ENCODE measurements at regions of chr10 and their contacts with region 1.

Region 1: GRCh38 chr10:2927958-2928840 is 139.1 kb upstream of the PFKP start:
- DNase-seq: peak; percentile 89
- ATAC-seq: peak; percentile 85
- H3K4me3 Mint-ChIP-seq: no peak overlapping the region
- H3K27ac Mint-ChIP-seq: no peak overlapping the region
- H3K4me1 Mint-ChIP-seq: peaks cover 30% of the 10 kb centered on the region
- H3K27me3 Mint-ChIP-seq: no peaks in the 10 kb centered on the region; the same call in 1 of the 2 replicates
- CTCF ChIP-seq: peak; percentile 85

Region 2: DNA sequence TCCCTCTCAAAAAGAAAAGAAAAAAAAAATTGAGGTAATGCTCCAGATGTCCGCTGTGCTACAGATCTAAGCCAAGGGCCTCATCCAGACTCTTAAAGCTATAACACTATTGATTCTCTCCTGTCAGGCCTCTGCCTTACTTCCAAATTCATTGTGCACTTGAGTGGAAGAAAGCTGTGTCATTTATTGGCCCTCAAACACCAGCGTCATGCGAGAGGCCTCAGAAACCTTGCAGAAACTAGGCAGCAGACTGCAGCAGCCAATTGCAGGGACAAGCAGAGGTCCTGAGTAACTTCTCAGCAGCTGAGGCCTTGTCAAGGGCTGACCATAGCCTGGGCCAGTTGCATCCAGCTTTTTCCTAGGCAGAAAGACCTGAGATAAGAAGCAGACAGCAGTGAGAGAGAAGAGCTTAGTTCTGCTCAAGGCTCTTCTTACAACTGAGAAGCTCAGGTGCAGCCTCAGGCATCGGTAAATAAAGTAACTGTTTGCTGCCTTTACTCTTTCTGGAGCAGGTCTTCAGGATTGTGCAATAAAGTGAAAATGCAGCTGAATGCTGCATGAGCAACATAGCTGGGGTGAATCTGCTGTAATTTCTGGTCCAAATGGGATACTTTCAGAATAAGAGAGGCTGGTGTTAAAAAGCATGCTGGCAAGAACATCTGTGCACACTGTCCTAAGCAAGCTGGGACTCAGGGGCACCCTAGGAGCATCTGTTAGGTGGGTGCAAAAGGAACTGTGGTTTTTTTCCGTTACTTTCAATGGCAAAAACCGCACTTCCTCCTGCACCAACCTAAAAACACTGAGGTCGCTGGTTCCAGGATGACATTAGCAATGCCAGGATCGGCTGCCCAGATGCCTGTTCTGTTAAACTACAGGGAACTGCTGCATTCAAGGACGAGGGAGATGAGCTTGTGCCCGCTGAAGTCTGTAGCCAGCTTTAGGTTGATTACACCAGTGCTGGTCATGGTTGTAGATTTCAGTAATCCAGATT is 42.6 kb before region 1 on chr10:
- CTCF ChIA-PET with region 1: no interaction called
- POLR2A ChIA-PET with region 1: no interaction called
- DNase-seq: no peak
- ATAC-seq: no peak
- H3K4me3 Mint-ChIP-seq: no peak overlapping the region
- H3K27ac Mint-ChIP-seq: no peak overlapping the region
- H3K4me1 Mint-ChIP-seq: 0 out of 2 replicates have a peak, but pooled peaks cover 6% of the 10 kb centered on the region
- H3K27me3 Mint-ChIP-seq: no peaks in the 10 kb centered on the region
- CTCF ChIP-seq: no peak

Region 3: DNA sequence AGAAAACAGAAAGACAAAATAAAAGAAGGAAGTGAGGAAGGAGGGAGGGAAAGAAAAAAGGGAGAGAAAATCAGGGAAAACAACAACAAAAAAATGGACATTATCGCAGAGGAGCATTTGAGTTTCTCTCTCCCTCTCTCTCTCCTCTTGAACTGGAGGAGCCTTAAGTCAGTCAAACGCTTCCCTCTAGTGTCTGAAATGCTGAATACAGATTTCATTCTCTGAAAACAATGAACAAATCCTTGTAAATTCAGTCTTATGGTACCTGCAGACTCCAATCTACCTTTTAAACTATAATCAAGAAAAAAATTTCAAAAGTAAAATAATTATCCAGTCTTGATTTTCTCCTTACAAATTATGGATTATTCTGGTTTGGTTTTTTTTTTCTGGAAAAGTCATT is 49.9 kb after region 1 on chr10:
- CTCF ChIA-PET with region 1: interaction called, 28 read pairs
- POLR2A ChIA-PET with region 1: no interaction called
- DNase-seq: no peak
- ATAC-seq: peak; percentile 84
- H3K4me3 Mint-ChIP-seq: no peak overlapping the region
- H3K27ac Mint-ChIP-seq: no peak overlapping the region
- H3K4me1 Mint-ChIP-seq: peaks cover 23% of the 10 kb centered on the region
- H3K27me3 Mint-ChIP-seq: no peaks in the 10 kb centered on the region
- CTCF ChIP-seq: no peak; the same call in 1 of the 2 replicates

Region 4: DNA sequence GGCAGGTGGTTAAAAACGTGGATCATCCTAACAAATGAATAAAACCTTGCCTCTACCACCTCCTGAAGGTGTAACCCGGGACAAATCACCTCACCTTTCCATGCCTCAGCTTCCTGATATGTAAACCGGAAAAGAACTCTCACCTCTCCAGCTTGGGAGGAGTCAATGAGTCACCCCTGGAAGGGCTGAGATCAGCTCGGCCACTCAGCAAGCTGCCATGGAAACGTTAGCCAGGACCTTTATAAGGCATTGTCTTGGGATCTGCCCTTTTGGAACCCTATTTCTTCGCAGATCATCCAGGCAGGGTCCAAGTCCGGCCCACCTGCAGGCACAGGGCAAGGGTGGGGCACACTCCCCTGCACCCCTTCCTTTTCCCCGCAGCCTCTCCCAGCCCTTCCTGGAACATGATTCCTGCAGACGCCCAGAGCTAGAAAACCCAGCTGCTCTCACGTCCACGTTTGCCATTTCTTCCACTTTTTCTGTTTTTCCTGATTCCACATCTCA is 57.6 kb after region 1 on chr10:
- CTCF ChIA-PET with region 1: interaction called, 16 read pairs
- POLR2A ChIA-PET with region 1: no interaction called
- DNase-seq: no peak
- ATAC-seq: peak; percentile 66
- H3K4me3 Mint-ChIP-seq: no peak overlapping the region
- H3K27ac Mint-ChIP-seq: no peak overlapping the region
- H3K4me1 Mint-ChIP-seq: peaks cover 22% of the 10 kb centered on the region
- H3K27me3 Mint-ChIP-seq: peaks cover 21% of the 10 kb centered on the region
- CTCF ChIP-seq: no peak

Region 5: DNA sequence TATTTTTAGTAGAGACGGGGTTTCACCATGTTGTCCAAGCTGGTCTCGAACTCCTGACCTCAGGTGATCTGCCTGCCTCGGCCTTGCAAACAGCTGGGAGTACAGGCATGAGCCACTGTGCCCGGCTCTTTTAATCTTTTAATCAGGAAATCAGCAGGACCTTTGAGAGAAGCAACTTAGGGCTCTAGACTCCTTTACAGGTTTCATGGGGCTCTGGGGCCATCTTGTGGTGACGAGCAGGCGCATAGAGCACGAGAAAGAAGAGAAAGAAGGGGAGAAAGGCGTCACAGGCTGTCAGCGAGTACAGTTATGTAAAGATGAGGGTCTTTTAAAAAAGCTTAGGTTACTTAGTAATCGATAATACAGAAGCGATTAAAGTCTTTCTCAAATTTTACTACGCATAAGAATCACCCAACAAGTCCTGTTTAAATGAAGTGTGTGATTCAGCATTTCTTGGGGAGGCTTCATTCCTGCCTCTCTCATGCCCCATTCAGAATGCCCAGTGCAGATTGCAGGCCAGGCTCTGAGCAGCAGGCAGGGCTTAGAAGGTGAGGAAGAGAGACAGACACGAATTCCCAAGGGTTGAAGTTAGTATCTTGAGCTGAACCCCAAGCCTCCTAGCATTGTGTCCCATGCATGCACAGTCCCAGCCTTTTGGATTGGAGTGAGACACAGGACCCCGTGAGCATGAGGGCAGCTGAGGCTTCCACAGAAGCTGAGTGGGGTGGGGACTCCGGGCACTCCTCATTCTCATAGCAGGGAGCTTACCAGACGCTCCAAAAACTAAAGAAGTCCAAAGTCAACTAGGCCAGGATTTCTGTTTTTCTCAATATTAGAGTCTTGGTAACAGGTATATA is 115.5 kb after region 1 on chr10:
- CTCF ChIA-PET with region 1: interaction called, 73 read pairs
- POLR2A ChIA-PET with region 1: no interaction called
- DNase-seq: peak; percentile 71
- ATAC-seq: peak; percentile 80
- H3K4me3 Mint-ChIP-seq: no peak overlapping the region
- H3K27ac Mint-ChIP-seq: no peak overlapping the region
- H3K4me1 Mint-ChIP-seq: peaks cover 34% of the 10 kb centered on the region
- H3K27me3 Mint-ChIP-seq: no peaks in the 10 kb centered on the region; the same call in 1 of the 2 replicates
- CTCF ChIP-seq: peak; percentile 33; the same call in 1 of the 2 replicates

Measured in WTC11 (cell line).